RWPE1 (cell line): ENCODE measurements at regions of chr11 and their contacts with region 1.

Region 1: DNA sequence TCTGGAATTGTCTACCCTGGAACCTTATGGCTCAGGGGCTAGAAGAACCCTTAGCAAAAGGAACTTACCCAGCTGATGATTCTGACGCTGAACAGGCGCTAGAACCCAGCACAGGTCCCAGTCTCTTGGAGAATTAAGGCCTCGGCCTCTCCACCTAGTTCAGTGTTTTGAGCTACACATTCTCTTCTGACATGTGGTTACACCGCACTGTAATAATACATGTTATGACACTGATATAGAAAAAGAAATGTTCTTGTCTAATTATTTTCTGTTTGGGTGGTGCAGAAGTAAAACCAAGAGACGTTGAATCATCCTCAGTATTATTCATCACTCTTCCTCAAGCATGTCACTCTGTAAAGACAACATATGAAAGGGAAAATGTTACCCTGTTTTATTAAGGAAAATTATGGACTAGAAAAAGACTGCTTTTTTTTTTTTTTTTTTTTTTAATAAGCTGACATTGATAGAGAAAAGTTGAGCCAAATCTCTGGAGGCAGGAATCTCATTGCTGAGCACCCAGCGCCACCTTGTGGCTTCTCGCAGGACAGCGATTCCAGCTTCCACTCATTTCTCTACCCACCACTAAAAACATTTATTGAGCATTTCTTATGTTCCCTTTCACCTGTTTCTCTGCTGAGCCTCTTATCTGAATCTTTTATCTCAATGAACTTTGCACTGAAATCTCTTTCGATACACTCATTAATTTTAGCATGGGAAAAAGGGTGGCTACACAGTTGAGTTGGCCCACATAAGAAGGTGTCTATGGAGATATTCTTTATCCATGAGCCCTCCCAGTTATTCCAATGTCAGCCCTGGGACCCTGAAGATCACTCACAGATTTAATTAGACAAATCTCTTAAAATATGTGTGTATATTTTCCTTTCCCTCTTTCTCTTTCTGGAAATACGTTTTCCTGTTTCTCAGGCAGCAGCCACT is 12.6 kb upstream of the APLNR start:
- DNase-seq: peak; percentile 48
- H3K27ac ChIP-seq: peak overlapping the region; percentile 60
- CTCF ChIP-seq: peak; percentile 83

Region 2: GRCh38 chr11:56841210-56841810 is 408.3 kb before region 1 on chr11:
- CTCF ChIA-PET with region 1: interaction called, 78 read pairs
- POLR2A ChIA-PET with region 1: no interaction called
- DNase-seq: peak; percentile 55
- H3K27ac ChIP-seq: no peak overlapping the region
- CTCF ChIP-seq: peak; percentile 73

Region 3: GRCh38 chr11:56846631-56847576 is 402.7 kb before region 1 on chr11:
- CTCF ChIA-PET with region 1: interaction called, 78 read pairs
- POLR2A ChIA-PET with region 1: no interaction called
- DNase-seq: no peak
- H3K27ac ChIP-seq: no peak overlapping the region
- CTCF ChIP-seq: no peak

Region 4: GRCh38 chr11:57116654-57117053 is 133.0 kb before region 1 on chr11:
- CTCF ChIA-PET with region 1: interaction called, 14 read pairs
- POLR2A ChIA-PET with region 1: no interaction called
- DNase-seq: peak; percentile 61
- H3K27ac ChIP-seq: no peak overlapping the region
- CTCF ChIP-seq: peak; percentile 56; the same call in 1 of the 2 replicates

Region 5: DNA sequence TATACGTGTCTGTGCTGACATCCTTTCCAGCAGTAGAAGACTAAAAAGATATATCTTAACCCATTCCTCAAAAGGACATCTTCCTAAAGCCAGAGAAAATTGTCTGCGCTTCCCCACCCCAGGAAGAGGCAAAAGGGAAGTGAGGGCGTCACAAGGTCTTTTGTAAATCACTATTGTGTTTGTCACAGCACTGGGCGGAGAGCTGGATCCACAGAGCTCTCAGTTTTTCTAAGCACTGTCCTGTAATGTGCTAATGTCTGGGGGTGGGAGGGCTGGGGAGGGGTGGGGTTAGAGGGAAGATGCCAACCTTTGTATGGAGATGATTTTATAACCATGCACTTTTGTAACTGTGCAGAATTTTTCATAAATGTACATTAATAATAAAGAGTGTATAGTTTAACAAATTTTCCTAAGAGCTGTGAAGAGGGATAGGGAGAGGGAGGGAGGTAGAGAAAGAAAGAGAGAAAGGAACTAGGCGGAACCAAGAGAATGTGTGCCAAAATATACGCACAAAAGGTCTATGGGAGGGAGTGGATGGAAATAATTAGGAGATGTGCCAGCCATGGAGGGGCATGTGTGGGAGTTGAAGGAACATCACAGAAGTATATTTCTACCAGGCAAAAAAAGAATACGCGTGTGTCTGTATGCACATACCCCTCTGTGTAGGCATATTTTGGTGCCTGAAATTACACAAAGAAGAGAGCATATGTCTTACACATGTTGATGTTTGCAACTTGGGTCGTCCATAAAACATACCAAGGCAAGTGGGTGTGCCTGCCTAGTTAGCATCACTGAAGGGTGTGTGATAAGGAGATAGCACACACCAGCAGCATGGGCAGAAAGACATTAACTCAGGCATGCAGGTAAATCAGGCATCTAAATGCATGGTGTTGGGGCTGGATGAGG is 58.1 kb before region 1 on chr11:
- CTCF ChIA-PET with region 1: no interaction called
- POLR2A ChIA-PET with region 1: no interaction called
- DNase-seq: no peak
- H3K27ac ChIP-seq: no peak overlapping the region
- CTCF ChIP-seq: no peak

Region 6: DNA sequence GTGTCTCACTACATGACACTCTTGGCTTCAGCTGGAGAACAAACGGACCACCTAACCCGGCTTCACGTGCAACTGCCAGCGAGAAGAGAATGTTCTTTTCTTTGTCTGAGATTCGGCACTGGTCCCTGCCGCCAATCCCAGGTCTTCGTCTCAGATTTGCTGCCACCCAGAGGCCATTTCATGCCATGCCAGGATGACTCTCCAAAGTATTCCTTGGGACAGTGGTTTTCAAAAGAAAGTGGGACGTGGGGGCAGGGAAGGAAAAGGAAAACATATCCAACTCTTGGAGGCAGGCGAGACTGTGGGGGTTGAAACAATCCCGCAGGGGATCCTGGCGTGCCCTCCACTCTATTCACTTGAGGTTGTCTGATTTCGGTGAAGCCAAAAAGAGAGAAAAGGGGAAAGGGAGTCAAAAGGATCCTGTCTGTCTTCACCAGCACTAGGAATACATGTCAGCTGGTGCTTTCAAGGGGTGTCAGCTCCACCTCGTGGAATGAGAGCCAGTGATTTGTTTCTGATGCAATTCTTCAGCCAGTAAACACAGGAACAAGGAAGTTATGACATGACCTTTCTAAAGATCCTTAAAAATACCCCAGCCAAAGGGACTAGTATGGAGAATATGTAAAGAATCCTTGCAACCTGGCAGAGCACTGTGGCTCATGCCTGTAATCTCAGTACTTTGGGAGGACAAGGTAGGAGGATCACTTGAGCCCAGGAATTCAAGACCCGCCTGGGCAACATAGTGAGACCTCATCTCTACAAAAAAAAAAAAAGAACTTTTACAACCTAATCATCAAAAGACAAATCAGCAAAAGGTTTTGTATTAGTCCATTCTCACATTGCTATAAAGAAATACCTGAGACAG is 28.4 kb after region 1 on chr11:
- CTCF ChIA-PET with region 1: interaction called, 11 read pairs
- POLR2A ChIA-PET with region 1: no interaction called
- DNase-seq: peak; percentile 80
- H3K27ac ChIP-seq: peak overlapping the region; percentile 81
- CTCF ChIP-seq: peak; percentile 87